Naive thymus-derived CD4-positive, alpha-beta T cell (primary cell): ENCODE measurements at regions of chr6 and their contacts with region 1.

Region 1: GRCh38 chr6:29792123-29793035 is 35.2 kb upstream of the HLA-G start:
- DNase-seq: peak; percentile 37 to 83 (median 67)
- ATAC-seq: peak; percentile 95
- H3K4me3 ChIP-seq: peak overlapping the region; percentile 80
- H3K4me3 Mint-ChIP-seq: peak overlapping the region; percentile 88 to 92 (median 89)
- H3K27ac ChIP-seq: peak overlapping the region; percentile 84
- H3K27ac Mint-ChIP-seq: peak overlapping the region; percentile 42 to 89 (median 79)
- H3K4me1 ChIP-seq: peaks cover 4 to 7% of the 10 kb centered on the region in 2 donors
- H3K4me1 Mint-ChIP-seq: peaks cover 15 to 38% (median 19%) of the 10 kb centered on the region in 7 donors
- H3K27me3 ChIP-seq: no peaks in the 10 kb centered on the region
- H3K27me3 Mint-ChIP-seq: peaks cover 7 to 72% (median 35%) of the 10 kb centered on the region in 5 donors

Region 2: GRCh38 chr6:29399525-29399924 is 392.9 kb before region 1 on chr6:
- CTCF ChIA-PET with region 1: no interaction called
- POLR2A ChIA-PET with region 1: no interaction called
- intact Hi-C with region 1: no loop called
- DNase-seq: no peak
- ATAC-seq: no peak
- H3K4me3 ChIP-seq: no peak overlapping the region
- H3K4me3 Mint-ChIP-seq: no peak overlapping the region
- H3K27ac ChIP-seq: no peak overlapping the region
- H3K27ac Mint-ChIP-seq: no peak overlapping the region
- H3K4me1 ChIP-seq: no peaks in the 10 kb centered on the region
- H3K4me1 Mint-ChIP-seq: no peaks in the 10 kb centered on the region
- H3K27me3 ChIP-seq: peaks cover 4 to 9% of the 10 kb centered on the region in 2 donors
- H3K27me3 Mint-ChIP-seq: peaks cover 9 to 77% (median 59%) of the 10 kb centered on the region in 5 donors

Region 3: DNA sequence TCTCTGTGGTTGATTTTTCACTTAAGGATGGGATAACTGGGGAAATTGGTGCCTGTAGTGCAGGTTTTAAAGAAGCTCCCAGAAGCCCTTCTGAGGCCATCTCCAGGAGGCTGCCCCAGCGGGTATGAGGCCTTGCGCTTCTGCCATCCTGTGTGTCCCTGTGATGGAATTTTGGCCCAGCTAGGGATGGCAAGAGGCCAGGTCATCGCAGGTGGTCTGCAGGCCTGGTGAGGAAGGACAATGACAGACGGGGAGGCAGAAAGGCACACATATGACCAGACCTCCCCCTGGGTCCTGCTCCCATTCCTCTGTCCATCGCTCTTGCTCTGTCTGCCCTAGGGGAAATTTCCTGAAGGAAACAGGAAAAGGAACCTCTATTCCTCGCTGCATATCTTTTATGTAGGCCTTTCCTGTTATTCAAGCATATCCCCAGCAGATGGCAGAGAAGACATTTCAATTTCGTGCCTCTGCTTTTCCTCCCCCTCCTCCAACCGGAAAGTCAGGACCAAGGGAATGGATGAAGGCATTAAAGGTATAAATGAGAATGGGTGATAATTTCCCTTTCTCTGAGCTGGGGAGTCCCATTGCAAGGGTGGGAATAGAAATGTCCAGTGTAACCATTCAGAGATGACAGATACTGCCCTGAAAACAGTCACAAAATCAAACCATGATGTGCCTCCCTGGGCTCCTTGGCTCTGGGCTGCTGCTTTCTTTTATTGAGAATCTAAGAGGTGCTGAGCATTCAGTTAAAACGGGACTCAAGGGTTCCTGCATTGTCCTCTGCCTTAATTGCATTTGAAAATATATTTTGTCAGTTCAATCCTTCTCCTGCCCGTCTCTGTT is 86.8 kb before region 1 on chr6:
- CTCF ChIA-PET with region 1: no interaction called
- POLR2A ChIA-PET with region 1: no interaction called
- intact Hi-C with region 1: loop called in 1 of 2 experiments (anchors 1 kb)
- DNase-seq: peak in 4 of 9 donors; percentile 41 to 60 (median 43)
- ATAC-seq: no peak
- H3K4me3 ChIP-seq: no peak overlapping the region
- H3K4me3 Mint-ChIP-seq: peak overlapping the region in 6 of 10 donors; percentile 20 to 77 (median 42)
- H3K27ac ChIP-seq: peak overlapping the region; percentile 2
- H3K27ac Mint-ChIP-seq: peak overlapping the region in 8 of 9 donors; percentile 16 to 95 (median 82)
- H3K4me1 ChIP-seq: peaks cover 47 to 54% of the 10 kb centered on the region in 2 donors
- H3K4me1 Mint-ChIP-seq: peaks cover 21 to 59% (median 51%) of the 10 kb centered on the region in 7 donors
- H3K27me3 ChIP-seq: no peaks in the 10 kb centered on the region
- H3K27me3 Mint-ChIP-seq: peaks cover 4 to 37% (median 8%) of the 10 kb centered on the region in 5 donors

Region 4: GRCh38 chr6:29809249-29809648 is 16.9 kb after region 1 on chr6:
- CTCF ChIA-PET with region 1: no interaction called
- POLR2A ChIA-PET with region 1: interaction called, 3 read pairs
- intact Hi-C with region 1: loop called in 1 of 2 experiments (anchors 2 kb)
- DNase-seq: no peak
- ATAC-seq: no peak
- H3K4me3 ChIP-seq: no peak overlapping the region
- H3K4me3 Mint-ChIP-seq: no peak overlapping the region
- H3K27ac ChIP-seq: no peak overlapping the region
- H3K27ac Mint-ChIP-seq: no peak overlapping the region
- H3K4me1 ChIP-seq: no peaks in the 10 kb centered on the region
- H3K4me1 Mint-ChIP-seq: peaks cover 0 to 3% (median 0%) of the 10 kb centered on the region in 7 donors
- H3K27me3 ChIP-seq: no peaks in the 10 kb centered on the region
- H3K27me3 Mint-ChIP-seq: peaks cover 10 to 44% (median 18%) of the 10 kb centered on the region in 5 donors

Region 5: DNA sequence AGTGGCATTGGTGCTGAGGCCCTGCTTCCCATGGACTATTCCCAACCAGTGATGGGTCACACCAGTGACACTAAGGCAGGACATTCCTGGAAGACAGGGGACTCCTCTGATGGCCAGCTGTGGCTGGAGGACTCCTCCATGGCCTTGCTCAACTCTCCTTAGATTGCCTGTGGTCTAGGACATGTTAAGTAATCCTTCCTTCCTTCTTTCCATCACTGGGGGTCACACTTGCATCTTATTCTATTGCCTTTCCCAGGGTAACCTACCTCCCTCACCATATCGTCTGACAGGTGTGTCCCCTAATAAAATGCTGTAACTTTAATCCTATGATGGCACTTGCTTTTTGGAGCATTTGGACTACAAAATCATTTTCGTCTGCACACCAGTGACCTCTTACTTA is 125.5 kb after region 1 on chr6:
- CTCF ChIA-PET with region 1: no interaction called
- POLR2A ChIA-PET with region 1: no interaction called
- intact Hi-C with region 1: no loop called
- DNase-seq: no peak
- ATAC-seq: no peak
- H3K4me3 ChIP-seq: no peak overlapping the region
- H3K4me3 Mint-ChIP-seq: no peak overlapping the region
- H3K27ac ChIP-seq: no peak overlapping the region
- H3K27ac Mint-ChIP-seq: no peak overlapping the region
- H3K4me1 ChIP-seq: no peaks in the 10 kb centered on the region
- H3K4me1 Mint-ChIP-seq: peaks cover 0 to 15% (median 0%) of the 10 kb centered on the region in 7 donors
- H3K27me3 ChIP-seq: no peaks in the 10 kb centered on the region
- H3K27me3 Mint-ChIP-seq: peaks cover 0 to 35% (median 0%) of the 10 kb centered on the region in 5 donors

Region 6: GRCh38 chr6:29953686-29954085 is 161.3 kb after region 1 on chr6:
- CTCF ChIA-PET with region 1: no interaction called
- POLR2A ChIA-PET with region 1: interaction called, 13 read pairs
- intact Hi-C with region 1: no loop called
- DNase-seq: no peak
- ATAC-seq: no peak
- H3K4me3 ChIP-seq: no peak overlapping the region
- H3K4me3 Mint-ChIP-seq: no peak overlapping the region
- H3K27ac ChIP-seq: no peak overlapping the region
- H3K27ac Mint-ChIP-seq: no peak overlapping the region
- H3K4me1 ChIP-seq: peaks cover 0 to 4% of the 10 kb centered on the region in 2 donors
- H3K4me1 Mint-ChIP-seq: peaks cover 4 to 40% (median 25%) of the 10 kb centered on the region in 7 donors
- H3K27me3 ChIP-seq: no peaks in the 10 kb centered on the region
- H3K27me3 Mint-ChIP-seq: no peaks in the 10 kb centered on the region

Region 7: DNA sequence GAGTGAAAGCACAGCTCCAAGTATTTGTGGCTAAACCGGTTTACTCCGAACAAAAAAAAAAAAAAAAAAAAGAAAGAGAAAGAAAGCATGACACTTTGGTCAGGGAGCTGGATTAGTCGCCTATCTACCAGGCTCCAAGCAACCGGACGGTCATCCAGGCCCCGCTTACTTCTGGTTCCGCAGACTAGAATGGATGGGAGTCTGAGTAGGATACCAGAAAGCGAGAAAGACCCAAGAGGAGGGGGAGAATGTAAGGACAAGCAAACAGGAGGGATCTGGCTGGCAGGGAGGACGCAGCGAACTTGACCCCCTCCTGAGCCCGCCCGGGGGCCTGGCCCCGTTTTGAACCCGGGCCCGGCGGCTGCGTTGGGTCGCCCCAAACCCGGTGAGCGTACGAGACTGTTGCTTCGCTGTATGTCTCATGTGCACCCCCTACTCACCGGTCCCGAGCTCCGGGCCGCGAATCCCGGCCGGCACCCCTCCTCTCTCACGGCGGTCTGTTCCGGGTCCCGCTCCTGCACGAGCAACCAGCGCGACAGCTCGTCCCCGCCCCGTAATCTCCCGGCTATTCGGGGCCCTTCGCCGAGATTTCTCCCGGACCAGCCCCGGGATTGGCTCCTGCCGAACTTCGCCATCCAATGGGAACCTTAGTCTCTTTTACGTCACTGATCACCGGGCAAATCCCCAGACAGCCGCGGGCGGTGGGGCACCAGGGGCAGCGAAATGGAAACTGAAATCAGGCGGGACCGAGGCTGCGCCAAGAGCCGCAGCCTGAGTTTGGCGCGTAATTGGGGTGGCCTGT is 420.7 kb after region 1 on chr6 and contains the start of gene TRIM26:
- CTCF ChIA-PET with region 1: no interaction called
- POLR2A ChIA-PET with region 1: interaction called, 3 read pairs
- intact Hi-C with region 1: loop called in 1 of 2 experiments (anchors 5 kb)
- DNase-seq: peak; percentile 88 to 99 (median 97)
- ATAC-seq: peak; percentile 94
- H3K4me3 ChIP-seq: peak within 1 kb of the TSS; percentile 83
- H3K4me3 Mint-ChIP-seq: peak within 1 kb of the TSS; percentile 89 to 100 (median 96)
- H3K27ac ChIP-seq: peak within 1 kb of the TSS; percentile 99
- H3K27ac Mint-ChIP-seq: peak within 1 kb of the TSS; percentile 96 to 100 (median 99)
- H3K4me1 ChIP-seq: peaks cover 32 to 39% of the 10 kb centered on the region in 2 donors
- H3K4me1 Mint-ChIP-seq: peaks cover 47 to 62% (median 52%) of the 10 kb centered on the region in 7 donors
- H3K27me3 ChIP-seq: no peaks in the 10 kb centered on the region
- H3K27me3 Mint-ChIP-seq: peaks cover 0 to 5% (median 0%) of the 10 kb centered on the region in 5 donors
- total RNA-seq, gene TRIM26: 40.1 to 73.1 (median 49.1) TPM